Motor neuron (in vitro differentiated cells): ENCODE measurements at regions of chr7 and their contacts with region 1.

Region 1: DNA sequence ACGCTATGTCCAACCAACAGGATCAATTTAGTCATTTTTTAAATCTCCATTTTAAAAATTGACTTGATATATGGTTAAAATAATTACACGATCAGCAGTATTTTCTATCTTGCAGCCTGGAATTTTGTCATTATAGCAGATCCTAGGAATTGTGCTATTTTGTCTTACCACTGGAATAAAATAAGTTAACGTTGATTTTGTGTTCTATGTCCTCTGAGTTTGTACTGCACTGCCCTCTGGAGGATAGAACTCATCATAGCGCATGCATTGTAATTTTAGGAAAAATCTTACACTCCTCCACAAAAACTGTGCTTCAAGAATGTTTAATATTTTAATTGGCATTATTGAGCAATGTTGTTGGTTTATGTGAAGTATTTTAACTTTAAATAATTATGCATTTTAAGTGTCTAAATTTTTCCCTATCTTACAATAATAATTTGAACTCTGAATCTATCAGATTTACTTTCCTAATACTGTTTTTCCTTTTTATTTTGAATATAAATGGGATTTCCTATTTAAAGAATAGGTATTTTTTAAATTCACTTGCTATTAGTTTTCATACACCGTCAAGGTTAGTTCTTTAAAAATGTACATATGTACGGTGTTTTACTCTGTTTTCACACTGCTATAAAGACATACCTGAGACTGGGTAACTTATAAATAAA is 220.1 kb downstream of the PPP1R3A start:
- ATAC-seq: peak in 1 of 8 experiments; percentile 47
- H3K4me3 ChIP-seq: no peak overlapping the region
- H3K27ac ChIP-seq: no peak overlapping the region
- H3K4me1 ChIP-seq: no peaks in the 10 kb centered on the region

Region 2: GRCh38 chr7:113421696-113422330 is 276.9 kb before region 1 on chr7:
- in situ Hi-C with region 1: loop called in 1 of 9 experiments (anchors 25 kb)
- ATAC-seq: peak; percentile 65 to 100 (median 83)
- H3K4me3 ChIP-seq: no peak overlapping the region
- H3K27ac ChIP-seq: no peak overlapping the region
- H3K4me1 ChIP-seq: peaks cover 0 to 12% of the 10 kb centered on the region in 2 donors